Sigmoid colon (tissue), 7 donors: ENCODE measurements at regions of chr15 and their contacts with region 1.

Region 1: DNA sequence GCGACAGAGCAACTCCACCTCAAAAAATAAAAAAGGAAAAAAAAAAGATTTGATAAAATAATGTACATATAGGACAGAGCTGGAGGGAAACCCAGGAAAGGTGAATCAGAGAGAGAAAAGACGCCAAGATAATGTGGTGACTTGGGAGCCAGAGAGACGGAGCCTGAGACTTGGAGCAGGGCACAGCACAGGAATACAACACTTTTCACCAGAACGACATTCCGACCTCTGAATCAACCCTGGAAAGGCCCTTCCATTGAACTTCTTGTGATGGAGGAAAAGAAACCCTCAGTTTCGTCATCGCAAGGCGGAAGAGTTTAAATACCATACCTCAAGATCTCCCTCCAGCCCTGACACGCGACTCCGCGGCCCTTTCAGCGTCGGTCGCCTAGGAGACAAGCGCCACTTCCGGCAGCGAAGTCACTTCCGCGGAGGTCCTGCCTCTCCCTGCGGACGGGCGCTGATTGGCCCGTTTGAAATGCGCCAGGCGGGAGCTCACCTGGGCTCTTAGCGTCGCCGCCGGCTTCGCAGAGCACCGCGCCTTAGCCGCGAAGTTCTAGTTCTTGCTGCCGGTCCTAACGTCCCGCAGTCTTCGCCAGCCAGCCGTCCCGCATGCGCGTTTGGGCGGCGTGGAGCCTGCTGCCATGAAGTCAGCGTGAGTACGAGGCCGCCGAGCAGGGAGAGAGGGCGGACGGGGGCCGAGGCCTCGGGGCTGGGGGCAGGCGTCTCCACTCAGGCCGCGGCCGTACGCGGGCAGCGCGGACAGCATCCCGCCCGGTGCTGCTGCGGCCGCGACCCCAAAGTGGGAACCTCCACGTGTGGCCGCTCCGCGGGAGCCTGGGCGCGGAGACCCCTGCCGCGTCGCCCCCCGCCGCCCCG is at the start of gene KIF23:
- DNase-seq: peak; percentile 93
- H3K4me3 ChIP-seq: peak within 1 kb of the TSS; percentile 59 to 95 (median 69)
- H3K27ac ChIP-seq: peak within 1 kb of the TSS; percentile 39 to 88 (median 76)
- H3K4me1 ChIP-seq: peaks cover 0 to 27% (median 9%) of the 10 kb centered on the region in 4 donors
- H3K27me3 ChIP-seq: no peaks in the 10 kb centered on the region
- CTCF ChIP-seq: no peak
- EP300 ChIP-seq: no peak
- POLR2A ChIP-seq: no peak
- total RNA-seq, gene KIF23: 0.16 to 3.9 (median 2.3) TPM

Region 2: GRCh38 chr15:69452692-69453521 is 38.8 kb after region 1 on chr15 and contains the start of gene RPLP1:
- intact Hi-C with region 1: loop called (anchors 5 kb)
- DNase-seq: peak; percentile 99
- H3K4me3 ChIP-seq: peak within 1 kb of the TSS; percentile 79 to 92 (median 88)
- H3K27ac ChIP-seq: peak within 1 kb of the TSS; percentile 94 to 97 (median 96)
- H3K4me1 ChIP-seq: peaks cover 0 to 37% (median 28%) of the 10 kb centered on the region in 4 donors
- H3K27me3 ChIP-seq: no peaks in the 10 kb centered on the region
- CTCF ChIP-seq: no peak
- EP300 ChIP-seq: no peak
- POLR2A ChIP-seq: peak; percentile 88 to 89
- total RNA-seq, gene RPLP1: 1,053 to 1,114 (median 1,095) TPM

Region 3: GRCh38 chr15:69462493-69463181 is 48.6 kb after region 1 on chr15:
- intact Hi-C with region 1: loop called (anchors 2 kb)
- DNase-seq: peak; percentile 98
- H3K4me3 ChIP-seq: peak overlapping the region; percentile 41 to 57 (median 54)
- H3K27ac ChIP-seq: peak overlapping the region; percentile 92 to 95 (median 94)
- H3K4me1 ChIP-seq: peaks cover 0 to 56% (median 25%) of the 10 kb centered on the region in 4 donors
- H3K27me3 ChIP-seq: no peaks in the 10 kb centered on the region
- CTCF ChIP-seq: peak; percentile 84 to 92 (median 88)
- EP300 ChIP-seq: peak in 1 of 4 donors; percentile 72
- POLR2A ChIP-seq: peak; percentile 77 to 83